Heart left ventricle (tissue), 16 donors: ENCODE measurements at regions of chr1 and their contacts with region 1.

Region 1: GRCh38 chr1:9196129-9197040 is 38.2 kb upstream of the H6PD start:
- DNase-seq: peak; percentile 70 to 82 (median 77)
- ATAC-seq: peak; percentile 35 to 74 (median 70)
- H3K4me3 ChIP-seq: peak overlapping the region in 9 of 12 donors; percentile 4 to 27 (median 17)
- H3K27ac ChIP-seq: peak overlapping the region in 11 of 12 donors; percentile 11 to 84 (median 49)
- H3K4me1 ChIP-seq: peaks cover 4 to 44% (median 27%) of the 10 kb centered on the region in 12 donors
- H3K27me3 ChIP-seq: peaks cover 0 to 40% (median 18%) of the 10 kb centered on the region in 9 donors
- CTCF ChIP-seq: peak; percentile 65 to 91 (median 86)
- POLR2A ChIP-seq: no peak

Region 2: GRCh38 chr1:8925406-8925805 is 271.0 kb before region 1 on chr1:
- intact Hi-C with region 1: loop called in 1 of 10 experiments (anchors 10 kb)
- DNase-seq: no peak
- ATAC-seq: no peak
- H3K4me3 ChIP-seq: no peak overlapping the region
- H3K27ac ChIP-seq: no peak overlapping the region
- H3K4me1 ChIP-seq: no peaks in the 10 kb centered on the region
- H3K27me3 ChIP-seq: no peaks in the 10 kb centered on the region
- CTCF ChIP-seq: no peak
- POLR2A ChIP-seq: no peak

Region 3: DNA sequence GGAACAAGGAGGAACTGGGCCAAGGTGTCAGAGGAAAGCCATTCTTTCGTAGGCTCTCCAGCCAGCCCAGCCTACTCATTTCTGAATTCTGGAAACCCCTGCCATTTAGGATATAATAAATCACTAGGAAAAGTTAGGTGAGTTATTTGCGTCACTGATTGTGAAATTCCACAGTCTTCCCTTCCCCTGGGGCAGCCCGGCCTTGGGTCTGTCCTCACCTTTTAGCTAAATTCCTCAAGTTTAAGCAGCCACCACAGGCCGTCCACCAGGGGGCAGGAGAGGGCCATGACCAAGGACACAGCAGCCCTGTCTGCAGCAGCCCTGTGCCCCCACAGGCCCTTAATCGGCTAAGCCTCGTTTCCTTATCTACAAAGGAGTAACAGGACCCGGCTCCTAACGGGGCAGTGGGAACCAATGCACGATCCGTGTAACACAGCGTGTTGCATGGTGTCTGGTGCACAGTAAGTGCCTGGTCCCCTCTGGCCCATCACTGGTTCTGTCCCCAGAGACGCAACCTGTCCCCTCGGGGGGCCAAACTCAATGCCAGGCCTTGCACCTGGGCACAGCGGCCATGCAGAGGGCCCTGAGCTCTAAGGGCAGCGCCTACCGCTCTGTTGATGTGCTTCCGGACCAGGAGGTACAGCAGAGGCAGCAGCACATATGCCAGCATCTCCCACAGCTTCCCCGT is 85.6 kb before region 1 on chr1:
- intact Hi-C with region 1: loop called (anchors 1 to 2 kb)
- DNase-seq: peak; percentile 83 to 93 (median 89)
- ATAC-seq: peak; percentile 48 to 82 (median 78)
- H3K4me3 ChIP-seq: no peak overlapping the region
- H3K27ac ChIP-seq: no peak overlapping the region
- H3K4me1 ChIP-seq: peaks cover 0 to 23% (median 6%) of the 10 kb centered on the region in 12 donors
- H3K27me3 ChIP-seq: no peaks in the 10 kb centered on the region
- CTCF ChIP-seq: peak; percentile 85 to 97 (median 92)
- POLR2A ChIP-seq: no peak

Region 4: DNA sequence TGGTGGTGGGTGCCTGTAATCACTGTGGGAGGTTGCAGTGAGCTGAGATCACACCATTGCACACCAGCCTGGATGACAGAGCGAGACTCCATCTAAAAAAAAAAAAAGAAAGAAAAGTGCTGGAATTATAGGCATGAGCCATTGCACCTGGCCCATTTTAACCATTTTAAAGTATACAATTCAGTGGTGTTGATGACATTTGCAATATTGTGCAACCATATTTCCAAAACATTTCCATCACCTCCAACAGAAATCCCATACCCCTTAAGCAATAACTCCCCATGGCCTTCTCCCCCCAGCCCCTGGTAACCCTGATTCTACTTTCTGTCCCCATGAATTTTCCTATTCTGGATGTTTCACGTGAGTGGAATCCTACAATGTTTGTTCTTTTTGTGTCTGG is 56.5 kb before region 1 on chr1:
- intact Hi-C with region 1: loop called in 9 of 10 experiments (anchors 1 to 5 kb)
- DNase-seq: no peak
- ATAC-seq: no peak
- H3K4me3 ChIP-seq: no peak overlapping the region
- H3K27ac ChIP-seq: no peak overlapping the region
- H3K4me1 ChIP-seq: peaks cover 0 to 16% (median 0%) of the 10 kb centered on the region in 12 donors
- H3K27me3 ChIP-seq: peaks cover 0 to 2% (median 0%) of the 10 kb centered on the region in 9 donors
- CTCF ChIP-seq: no peak
- POLR2A ChIP-seq: no peak

Region 5: GRCh38 chr1:9150582-9151327 is 45.6 kb before region 1 on chr1:
- intact Hi-C with region 1: loop called in 1 of 10 experiments (anchors 5 kb)
- DNase-seq: peak in 4 of 5 donors; percentile 64 to 79 (median 74)
- ATAC-seq: peak; percentile 59 to 79 (median 66)
- H3K4me3 ChIP-seq: peak overlapping the region in 4 of 12 donors; percentile 3 to 19 (median 13)
- H3K27ac ChIP-seq: peak overlapping the region; percentile 43 to 98 (median 80)
- H3K4me1 ChIP-seq: peaks cover 0 to 46% (median 22%) of the 10 kb centered on the region in 12 donors
- H3K27me3 ChIP-seq: no peaks in the 10 kb centered on the region
- CTCF ChIP-seq: no peak
- POLR2A ChIP-seq: no peak

Region 6: GRCh38 chr1:9486466-9487140 is 290.2 kb after region 1 on chr1:
- intact Hi-C with region 1: loop called in 1 of 10 experiments (anchors 10 kb)
- DNase-seq: no peak
- ATAC-seq: no peak
- H3K4me3 ChIP-seq: no peak overlapping the region
- H3K27ac ChIP-seq: peak overlapping the region in 2 of 12 donors; percentile 4 to 50
- H3K4me1 ChIP-seq: peaks cover 0 to 3% (median 0%) of the 10 kb centered on the region in 12 donors
- H3K27me3 ChIP-seq: no peaks in the 10 kb centered on the region
- CTCF ChIP-seq: no peak
- POLR2A ChIP-seq: no peak